ENCODE measurements at regions of chr1 and their contacts with region 1.

Region 1: GRCh38 chr1:28877132-28877781 is 37.1 kb upstream of the EPB41 start:
- DNase-seq: peak in 1 of 2 experiments; percentile 92
- H3K4me3 ChIP-seq: no peak overlapping the region
- H3K27ac ChIP-seq: no peak overlapping the region
- H3K4me1 ChIP-seq: no peaks in the 10 kb centered on the region
- H3K27me3 ChIP-seq: no peaks in the 10 kb centered on the region
- CTCF ChIP-seq: peak; percentile 79 to 96 (median 92)
- EP300 ChIP-seq: no peak
- POLR2A ChIP-seq: no peak
- RAD21 ChIP-seq: peak; percentile 99

Region 2: GRCh38 chr1:28613175-28613574 is 264.1 kb before region 1 on chr1:
- CTCF ChIA-PET with region 1: interaction called, 10 read pairs
- POLR2A ChIA-PET with region 1: no interaction called
- DNase-seq: no peak
- H3K4me3 ChIP-seq: no peak overlapping the region
- H3K27ac ChIP-seq: no peak overlapping the region
- H3K4me1 ChIP-seq: no peaks in the 10 kb centered on the region
- H3K27me3 ChIP-seq: no peaks in the 10 kb centered on the region
- CTCF ChIP-seq: no peak
- EP300 ChIP-seq: no peak
- POLR2A ChIP-seq: no peak
- RAD21 ChIP-seq: no peak

Region 3: GRCh38 chr1:28756846-28757245 is 120.4 kb before region 1 on chr1:
- CTCF ChIA-PET with region 1: interaction called, 13 read pairs
- POLR2A ChIA-PET with region 1: no interaction called
- DNase-seq: no peak
- H3K4me3 ChIP-seq: no peak overlapping the region
- H3K27ac ChIP-seq: no peak overlapping the region
- H3K4me1 ChIP-seq: peaks cover 0 to 9% (median 1%) of the 10 kb centered on the region in 4 experiments; a peak in 2 of 7 replicates
- H3K27me3 ChIP-seq: no peaks in the 10 kb centered on the region
- CTCF ChIP-seq: peak in 2 of 3 experiments; percentile 15 to 51; a peak in 2 of 4 replicates
- EP300 ChIP-seq: no peak
- POLR2A ChIP-seq: no peak
- RAD21 ChIP-seq: peak in 1 of 2 experiments; percentile 37; a peak in 2 of 4 replicates

Region 4: GRCh38 chr1:28792644-28793121 is 84.6 kb before region 1 on chr1:
- CTCF ChIA-PET with region 1: interaction called, 160 read pairs
- POLR2A ChIA-PET with region 1: no interaction called
- DNase-seq: no peak
- H3K4me3 ChIP-seq: no peak overlapping the region
- H3K27ac ChIP-seq: no peak overlapping the region
- H3K4me1 ChIP-seq: peaks cover 0 to 8% (median 2%) of the 10 kb centered on the region in 4 experiments; a peak in 2 of 7 replicates
- H3K27me3 ChIP-seq: no peaks in the 10 kb centered on the region
- CTCF ChIP-seq: no peak
- EP300 ChIP-seq: no peak
- POLR2A ChIP-seq: no peak
- RAD21 ChIP-seq: no peak

Region 5: DNA sequence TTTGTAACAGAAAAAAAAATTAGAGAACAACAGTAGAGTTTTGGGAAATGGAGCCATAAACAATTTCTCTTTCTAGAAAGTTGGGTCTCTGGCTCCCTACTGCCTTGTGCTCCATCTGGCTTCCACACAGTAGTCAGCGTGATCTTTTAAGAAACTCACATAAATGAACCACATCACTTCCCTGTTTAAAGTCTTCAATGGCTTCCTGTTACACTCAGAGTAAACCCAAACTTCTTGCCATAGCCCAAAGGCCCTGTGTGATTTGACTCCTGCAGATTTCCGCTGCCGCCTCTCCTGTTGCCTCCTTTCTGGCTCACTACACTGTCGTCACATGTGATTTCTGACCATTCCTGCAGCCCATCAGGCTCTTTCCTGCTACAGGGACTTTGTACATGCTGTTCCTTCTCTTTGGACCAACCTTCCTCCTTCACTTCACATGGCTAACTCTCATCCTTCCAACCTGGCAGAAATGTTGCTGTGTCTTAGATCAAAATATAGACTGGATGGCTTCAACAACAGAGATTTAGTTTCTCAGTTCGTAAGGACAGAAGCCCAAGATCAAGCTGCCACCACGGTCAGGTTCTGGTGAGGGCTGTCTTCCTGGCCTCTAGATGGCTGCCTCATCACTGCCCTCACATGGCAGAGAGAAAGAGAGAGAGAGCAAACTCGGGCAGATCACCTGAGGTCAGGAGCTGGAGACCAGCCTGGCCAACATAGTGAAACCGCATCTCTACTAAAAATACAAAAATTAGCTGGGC is 31.3 kb before region 1 on chr1:
- CTCF ChIA-PET with region 1: interaction called, 44 read pairs
- POLR2A ChIA-PET with region 1: no interaction called
- DNase-seq: no peak
- H3K4me3 ChIP-seq: no peak overlapping the region
- H3K27ac ChIP-seq: peak overlapping the region; percentile 11; the same call in 1 of the 2 replicates
- H3K4me1 ChIP-seq: no peaks in the 10 kb centered on the region; a peak in 1 of 7 replicates
- H3K27me3 ChIP-seq: no peaks in the 10 kb centered on the region
- CTCF ChIP-seq: peak; percentile 42 to 46 (median 43)
- EP300 ChIP-seq: no peak
- POLR2A ChIP-seq: no peak
- RAD21 ChIP-seq: peak; percentile 46 to 51

Region 6: DNA sequence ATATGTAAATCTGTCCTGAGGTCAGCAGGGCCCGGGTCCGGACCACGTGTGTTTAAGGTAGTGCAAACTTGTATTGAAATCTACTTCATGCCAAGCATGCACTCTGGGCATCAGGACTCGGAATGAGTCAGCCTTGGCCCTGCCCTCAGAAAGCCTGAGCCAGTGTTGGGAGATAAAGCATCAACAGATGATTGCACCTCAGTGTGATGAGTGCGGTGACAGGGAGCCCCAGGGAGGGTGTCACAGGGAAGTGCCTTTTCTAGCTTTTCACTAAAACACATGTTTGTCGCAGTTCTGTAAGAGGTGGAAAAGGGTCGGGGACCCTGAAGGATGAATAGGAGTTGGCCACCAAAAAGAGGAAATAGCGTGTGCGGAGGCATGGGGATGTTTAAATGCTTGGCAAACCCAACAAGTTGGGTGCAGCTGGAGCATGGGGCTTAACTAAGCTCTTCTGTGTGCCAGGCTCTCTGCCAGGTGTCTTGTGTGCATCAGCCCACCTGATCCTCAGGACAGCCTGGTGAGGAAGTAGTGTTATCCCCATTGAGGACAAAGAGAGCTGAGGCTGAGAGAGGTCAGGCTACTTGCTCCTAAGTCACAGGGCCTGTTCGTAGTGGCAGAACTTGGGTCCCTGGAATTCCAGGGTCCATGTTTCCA is 11.1 kb before region 1 on chr1:
- CTCF ChIA-PET with region 1: interaction called, 56 read pairs
- POLR2A ChIA-PET with region 1: no interaction called
- DNase-seq: no peak
- H3K4me3 ChIP-seq: no peak overlapping the region
- H3K27ac ChIP-seq: no peak overlapping the region
- H3K4me1 ChIP-seq: peaks cover 0 to 5% (median 0%) of the 10 kb centered on the region in 4 experiments; a peak in 2 of 7 replicates
- H3K27me3 ChIP-seq: no peaks in the 10 kb centered on the region
- CTCF ChIP-seq: no peak
- EP300 ChIP-seq: no peak
- POLR2A ChIP-seq: no peak
- RAD21 ChIP-seq: no peak

Region 7: GRCh38 chr1:28914228-28915030 is 37.2 kb after region 1 on chr1 and contains the start of gene EPB41:
- CTCF ChIA-PET with region 1: no interaction called
- POLR2A ChIA-PET with region 1: no interaction called
- DNase-seq: peak; percentile 96
- H3K4me3 ChIP-seq: peak within 1 kb of the TSS; percentile 78 to 95 (median 94)
- H3K27ac ChIP-seq: peak within 1 kb of the TSS; percentile 74
- H3K4me1 ChIP-seq: peaks cover 4 to 15% (median 7%) of the 10 kb centered on the region in 4 experiments; a peak in 5 of 7 replicates
- H3K27me3 ChIP-seq: no peaks in the 10 kb centered on the region
- CTCF ChIP-seq: no peak
- EP300 ChIP-seq: no peak
- POLR2A ChIP-seq: peak; percentile 78 to 90
- RAD21 ChIP-seq: no peak
- total RNA-seq, gene EPB41: 106 and 109 TPM in 2 replicates

Region 8: DNA sequence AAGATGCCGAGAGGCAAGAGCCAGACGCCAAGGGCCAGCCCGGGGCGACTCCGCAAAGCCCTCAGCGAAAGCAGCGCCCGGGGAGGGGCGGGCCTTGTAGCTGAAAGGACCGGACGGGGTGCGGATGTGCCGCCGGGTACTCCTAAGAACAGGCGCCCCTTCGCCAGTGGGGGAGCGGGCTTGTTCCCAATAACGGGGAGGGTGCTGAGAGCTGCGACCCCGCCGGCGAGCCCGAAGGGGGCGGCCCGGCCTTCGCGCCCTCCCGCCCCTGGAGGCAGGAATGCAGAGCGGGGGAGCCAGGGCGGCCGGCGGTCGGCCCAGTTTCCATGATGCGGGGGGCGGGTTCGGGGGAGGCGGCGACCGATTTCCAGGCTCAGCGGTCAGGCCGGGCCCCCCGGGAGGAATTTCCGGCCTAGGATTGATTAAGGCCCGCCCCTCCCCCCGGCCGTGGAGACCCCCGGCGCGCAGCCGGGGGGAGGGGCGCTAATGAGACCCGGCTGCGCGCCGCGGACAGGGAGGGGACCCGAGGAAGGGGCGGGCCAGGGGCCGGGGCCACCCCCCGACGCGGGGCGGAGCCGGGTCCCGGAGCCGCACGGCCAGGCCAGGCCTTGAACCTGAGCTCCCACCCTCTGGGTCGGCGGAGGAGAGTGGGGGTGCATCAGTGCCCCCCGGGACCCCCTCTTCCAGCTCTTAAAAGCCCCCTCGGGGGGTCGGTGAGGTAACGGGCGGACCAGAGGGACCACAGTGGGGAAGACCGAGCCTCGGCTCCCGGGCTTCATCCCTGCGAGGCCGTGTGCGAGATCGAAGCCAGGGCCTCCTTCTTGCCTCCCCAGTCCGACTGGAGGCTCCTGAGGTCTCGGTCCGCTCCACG is 247.3 kb after region 1 on chr1:
- CTCF ChIA-PET with region 1: interaction called, 13 read pairs
- POLR2A ChIA-PET with region 1: no interaction called
- DNase-seq: peak; percentile 66 to 93
- H3K4me3 ChIP-seq: peak overlapping the region; percentile 51 to 91 (median 61)
- H3K27ac ChIP-seq: peak overlapping the region; percentile 48; the same call in 1 of the 2 replicates
- H3K4me1 ChIP-seq: peaks cover 0 to 19% (median 9%) of the 10 kb centered on the region in 4 experiments; a peak in 6 of 7 replicates
- H3K27me3 ChIP-seq: peaks cover 0 to 42% (median 25%) of the 10 kb centered on the region in 4 experiments; a peak in 6 of 7 replicates
- CTCF ChIP-seq: peak in 2 of 3 experiments; percentile 42 to 77; a peak in 3 of 4 replicates
- EP300 ChIP-seq: peak; percentile 36 to 82; a peak in 2 of 3 replicates
- POLR2A ChIP-seq: no peak; a peak in 1 of 3 replicates
- RAD21 ChIP-seq: peak in 1 of 2 experiments; percentile 23; a peak in 2 of 4 replicates

Region 9: DNA sequence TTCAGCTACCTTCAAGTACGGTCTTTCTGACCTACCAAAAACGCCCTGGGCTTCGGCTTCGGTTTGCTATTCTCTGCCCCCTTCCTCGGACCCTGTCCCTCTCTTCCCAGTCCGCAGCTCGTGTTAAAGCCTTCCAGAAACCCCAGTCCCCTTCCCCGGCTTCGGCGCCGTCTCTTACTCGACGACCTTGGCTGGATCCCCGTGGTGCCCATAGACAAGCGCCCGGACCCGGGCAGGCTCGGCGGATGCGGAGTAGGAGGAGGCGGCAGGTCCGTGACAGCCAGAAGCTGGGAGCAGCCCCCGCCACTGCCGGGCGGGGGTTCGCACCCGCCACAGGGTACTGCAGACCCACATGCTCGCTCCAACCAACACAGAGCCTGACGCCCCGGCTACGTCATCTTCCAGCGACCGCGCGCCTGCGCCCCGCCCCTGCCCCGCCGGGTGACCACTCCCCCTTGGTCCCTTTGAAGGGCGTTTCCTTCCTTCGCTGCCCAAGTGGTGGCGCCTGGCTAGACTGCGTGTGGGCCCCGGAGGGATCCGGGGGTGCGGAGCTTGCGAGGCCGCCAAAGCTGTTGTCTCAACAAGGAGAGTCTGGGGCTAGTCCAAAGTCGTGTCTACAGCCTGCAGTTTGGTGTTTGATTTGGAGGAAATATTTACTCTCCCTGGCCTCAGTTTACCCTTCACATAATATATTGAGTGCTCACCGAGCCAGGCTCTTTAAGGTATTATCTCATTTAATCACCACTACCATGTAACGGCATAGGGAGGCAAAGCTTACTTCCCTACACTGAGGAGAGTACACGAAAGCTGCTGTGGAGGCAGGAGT is 353.5 kb after region 1 on chr1 and contains the start of gene MECR:
- CTCF ChIA-PET with region 1: no interaction called
- POLR2A ChIA-PET with region 1: no interaction called
- DNase-seq: peak; percentile 89 to 100
- H3K4me3 ChIP-seq: peak within 1 kb of the TSS; percentile 78 to 90 (median 84)
- H3K27ac ChIP-seq: peak within 1 kb of the TSS; percentile 68; the same call in 1 of the 2 replicates
- H3K4me1 ChIP-seq: peaks cover 0 to 8% (median 3%) of the 10 kb centered on the region in 4 experiments; a peak in 3 of 7 replicates
- H3K27me3 ChIP-seq: peaks cover 0 to 1% (median 0%) of the 10 kb centered on the region in 4 experiments; a peak in 3 of 7 replicates
- CTCF ChIP-seq: peak in 2 of 3 experiments; percentile 5 to 23; a peak in 1 of 4 replicates
- EP300 ChIP-seq: peak in 1 of 2 experiments; percentile 73; a peak in 1 of 3 replicates
- POLR2A ChIP-seq: peak in 1 of 2 experiments; percentile 90; a peak in 2 of 3 replicates
- RAD21 ChIP-seq: no peak
- total RNA-seq, gene MECR: 24.4 and 26.5 TPM in 2 replicates

Measured in H1 (cell line).